ENCODE measurements at regions of chr15 and their contacts with region 1.

Region 1: GRCh38 chr15:78540141-78540928 is at the start of gene PSMA4:
- DNase-seq: peak; percentile 79
- ATAC-seq: peak; percentile 82
- H3K4me3 ChIP-seq: peak within 1 kb of the TSS; percentile 99
- H3K27ac ChIP-seq: peak within 1 kb of the TSS; percentile 69
- H3K4me1 ChIP-seq: peaks cover 18% of the 10 kb centered on the region
- H3K27me3 ChIP-seq: no peaks in the 10 kb centered on the region
- CTCF ChIP-seq: no peak
- total RNA-seq, gene PSMA4: 198 and 245 TPM in 2 replicates

Region 2: GRCh38 chr15:78506971-78507830 is 33.1 kb before region 1 on chr15 and contains the start of gene HYKK:
- CTCF ChIA-PET with region 1: no interaction called
- POLR2A ChIA-PET with region 1: no interaction called
- intact Hi-C with region 1: loop called (anchors 5 kb)
- DNase-seq: peak; percentile 98
- ATAC-seq: peak; percentile 95
- H3K4me3 ChIP-seq: peak within 1 kb of the TSS; percentile 76
- H3K27ac ChIP-seq: peak within 1 kb of the TSS; percentile 16; the same call in 1 of the 2 replicates
- H3K4me1 ChIP-seq: peaks cover 5% of the 10 kb centered on the region; the same call in 1 of the 2 replicates
- H3K27me3 ChIP-seq: no peaks in the 10 kb centered on the region
- CTCF ChIP-seq: no peak
- total RNA-seq, gene HYKK: 2.9 and 7.3 TPM in 2 replicates

Region 3: DNA sequence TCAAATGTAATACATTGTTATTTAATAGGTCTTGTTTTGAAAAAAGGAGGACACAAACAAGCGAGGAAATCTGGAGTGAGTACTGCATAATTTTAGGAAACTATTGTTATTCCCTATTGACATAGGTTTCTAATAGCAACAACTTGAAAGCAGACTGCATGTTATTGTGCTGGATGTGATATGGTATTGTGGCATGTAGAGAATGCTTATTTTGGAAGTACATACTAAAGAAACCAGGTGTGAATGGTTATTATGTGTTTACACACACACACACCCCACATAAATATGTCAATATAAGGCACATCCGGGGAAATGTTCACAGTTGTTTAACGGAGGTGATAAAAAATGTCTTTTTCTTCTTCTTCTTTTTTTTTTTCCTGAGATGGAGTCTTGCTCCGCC is 326.5 kb after region 1 on chr15:
- CTCF ChIA-PET with region 1: no interaction called
- POLR2A ChIA-PET with region 1: interaction called, 14 read pairs
- intact Hi-C with region 1: no loop called
- DNase-seq: no peak
- ATAC-seq: no peak; the same call in 1 of the 2 replicates
- H3K4me3 ChIP-seq: no peak overlapping the region
- H3K27ac ChIP-seq: no peak overlapping the region
- H3K4me1 ChIP-seq: no peaks in the 10 kb centered on the region
- H3K27me3 ChIP-seq: no peaks in the 10 kb centered on the region
- CTCF ChIP-seq: no peak

Measured in PC-3 (cell line).